Esophagus muscularis mucosa (tissue), 4 donors: ENCODE measurements at regions of chr3 and their contacts with region 1.

Region 1: DNA sequence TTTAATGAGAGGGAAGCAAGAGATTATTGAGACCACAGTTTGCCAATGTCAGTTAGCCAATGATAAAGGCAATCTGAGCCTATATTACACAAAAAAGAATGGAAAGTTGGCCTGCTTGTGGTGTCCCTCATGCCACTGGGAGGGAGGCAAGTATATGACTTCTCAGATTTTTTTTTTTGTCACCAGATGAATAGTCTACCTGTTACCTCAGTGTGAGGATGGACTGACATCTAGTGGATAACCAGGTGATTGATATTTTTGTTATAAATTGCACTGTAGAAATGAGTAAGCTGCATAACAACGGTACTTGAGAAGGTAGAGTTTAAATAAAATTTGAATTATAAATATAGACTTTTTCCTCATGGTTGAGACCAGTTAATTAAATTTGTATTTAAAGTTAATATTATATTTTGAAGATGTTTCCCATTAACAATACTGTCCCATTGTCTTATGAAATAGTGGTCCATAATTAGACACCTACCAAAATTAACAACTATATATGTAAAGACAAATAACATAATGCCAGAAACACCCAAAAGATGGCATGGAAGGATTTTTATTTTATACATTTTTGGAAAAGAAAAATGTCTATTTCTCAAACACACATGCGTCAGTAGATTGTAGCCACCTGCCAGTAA is 237.8 kb upstream of the GADL1 start:
- DNase-seq: no peak
- H3K4me3 ChIP-seq: no peak overlapping the region
- H3K27ac ChIP-seq: no peak overlapping the region
- H3K4me1 ChIP-seq: no peaks in the 10 kb centered on the region
- H3K27me3 ChIP-seq: no peaks in the 10 kb centered on the region
- CTCF ChIP-seq: peak; percentile 38 to 53 (median 43)
- EP300 ChIP-seq: no peak
- POLR2A ChIP-seq: no peak

Region 2: GRCh38 chr3:30042274-30042859 is 1089.9 kb before region 1 on chr3:
- intact Hi-C with region 1: loop called (anchors 10 kb)
- DNase-seq: no peak
- H3K4me3 ChIP-seq: no peak overlapping the region
- H3K27ac ChIP-seq: no peak overlapping the region
- H3K4me1 ChIP-seq: peaks cover 0 to 5% (median 0%) of the 10 kb centered on the region in 4 donors
- H3K27me3 ChIP-seq: no peaks in the 10 kb centered on the region
- CTCF ChIP-seq: peak; percentile 68 to 77 (median 75)
- EP300 ChIP-seq: no peak
- POLR2A ChIP-seq: no peak

Region 3: GRCh38 chr3:30779686-30780287 is 352.5 kb before region 1 on chr3:
- intact Hi-C with region 1: loop called (anchors 5 kb)
- DNase-seq: no peak
- H3K4me3 ChIP-seq: no peak overlapping the region
- H3K27ac ChIP-seq: no peak overlapping the region
- H3K4me1 ChIP-seq: peaks cover 0 to 10% (median 0%) of the 10 kb centered on the region in 4 donors
- H3K27me3 ChIP-seq: no peaks in the 10 kb centered on the region
- CTCF ChIP-seq: peak in 2 of 3 experiments; percentile 17 to 46
- EP300 ChIP-seq: no peak
- POLR2A ChIP-seq: no peak